ENCODE measurements at regions of chr5 and their contacts with region 1.

Region 1: GRCh38 chr5:84362061-84362720 is 22.5 kb downstream of the EDIL3 start:
- DNase-seq: no peak
- ATAC-seq: no peak
- H3K4me3 ChIP-seq: no peak overlapping the region
- H3K4me3 Mint-ChIP-seq: no peak overlapping the region
- H3K27ac ChIP-seq: no peak overlapping the region
- H3K27ac Mint-ChIP-seq: no peak overlapping the region
- H3K4me1 ChIP-seq: no peaks in the 10 kb centered on the region
- H3K4me1 Mint-ChIP-seq: no peaks in the 10 kb centered on the region
- H3K27me3 ChIP-seq: no peaks in the 10 kb centered on the region
- H3K27me3 Mint-ChIP-seq: no peaks in the 10 kb centered on the region
- CTCF ChIP-seq: no peak

Region 2: DNA sequence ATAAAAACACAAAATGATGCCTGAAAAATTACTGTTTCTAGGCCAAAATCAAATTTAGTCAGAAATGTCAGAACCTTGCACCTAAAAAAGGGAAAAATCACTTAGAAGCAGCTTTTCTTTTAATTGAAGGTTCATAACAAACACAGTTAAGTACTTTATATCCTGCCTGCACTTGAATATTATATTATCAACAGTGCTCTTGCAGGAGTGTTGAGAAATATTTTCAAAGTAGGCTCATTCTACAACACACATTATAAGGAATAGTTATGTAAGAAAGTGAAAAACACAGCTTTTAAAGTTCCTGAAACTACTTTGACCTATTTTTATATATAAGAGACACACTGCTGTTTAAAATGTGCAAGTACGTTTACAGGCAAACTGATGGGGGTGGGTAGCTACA is 14.2 kb after region 1 on chr5:
- CTCF ChIA-PET with region 1: no interaction called
- POLR2A ChIA-PET with region 1: no interaction called
- intact Hi-C with region 1: loop called in 1 of 2 experiments (anchors 1 kb)
- DNase-seq: no peak
- ATAC-seq: no peak
- H3K4me3 ChIP-seq: no peak overlapping the region
- H3K4me3 Mint-ChIP-seq: no peak overlapping the region
- H3K27ac ChIP-seq: no peak overlapping the region
- H3K27ac Mint-ChIP-seq: no peak overlapping the region
- H3K4me1 ChIP-seq: no peaks in the 10 kb centered on the region
- H3K4me1 Mint-ChIP-seq: no peaks in the 10 kb centered on the region
- H3K27me3 ChIP-seq: no peaks in the 10 kb centered on the region
- H3K27me3 Mint-ChIP-seq: no peaks in the 10 kb centered on the region
- CTCF ChIP-seq: no peak

Region 3: DNA sequence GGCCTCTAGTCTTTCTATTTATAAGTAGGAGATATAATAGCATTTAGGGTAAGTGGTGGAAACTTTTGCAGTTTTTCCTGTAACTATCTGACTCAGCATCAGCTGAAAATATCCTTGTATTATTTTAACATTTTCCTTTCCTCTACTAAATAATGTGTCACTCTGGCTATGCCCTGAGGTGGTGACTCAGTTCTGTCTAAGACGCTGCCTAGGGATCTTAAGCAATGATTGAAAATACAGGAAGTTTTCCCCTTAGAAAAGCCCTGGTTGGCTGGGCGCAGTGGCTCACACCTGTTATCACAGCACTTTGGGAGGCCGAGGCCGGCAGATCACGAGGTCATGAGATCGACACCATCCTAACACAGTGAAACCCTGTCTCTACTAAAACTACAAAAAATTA is 31.8 kb after region 1 on chr5:
- CTCF ChIA-PET with region 1: no interaction called
- POLR2A ChIA-PET with region 1: no interaction called
- intact Hi-C with region 1: loop called in 1 of 2 experiments (anchors 1 kb)
- DNase-seq: no peak
- ATAC-seq: no peak
- H3K4me3 ChIP-seq: no peak overlapping the region
- H3K4me3 Mint-ChIP-seq: no peak overlapping the region
- H3K27ac ChIP-seq: no peak overlapping the region
- H3K27ac Mint-ChIP-seq: no peak overlapping the region
- H3K4me1 ChIP-seq: no peaks in the 10 kb centered on the region
- H3K4me1 Mint-ChIP-seq: no peaks in the 10 kb centered on the region
- H3K27me3 ChIP-seq: no peaks in the 10 kb centered on the region
- H3K27me3 Mint-ChIP-seq: no peaks in the 10 kb centered on the region
- CTCF ChIP-seq: no peak

Measured in CD8-positive, alpha-beta T cell (primary cell).